ENCODE measurements at regions of chr7 and their contacts with region 1.

Region 1: GRCh38 chr7:47254081-47255006 is 327.6 kb downstream of the TNS3 start:
- DNase-seq: peak; percentile 79
- H3K4me3 ChIP-seq: peak overlapping the region; percentile 50
- H3K27ac ChIP-seq: no peak overlapping the region
- H3K4me1 ChIP-seq: peaks cover 9% of the 10 kb centered on the region
- CTCF ChIP-seq: peak; percentile 87

Region 2: DNA sequence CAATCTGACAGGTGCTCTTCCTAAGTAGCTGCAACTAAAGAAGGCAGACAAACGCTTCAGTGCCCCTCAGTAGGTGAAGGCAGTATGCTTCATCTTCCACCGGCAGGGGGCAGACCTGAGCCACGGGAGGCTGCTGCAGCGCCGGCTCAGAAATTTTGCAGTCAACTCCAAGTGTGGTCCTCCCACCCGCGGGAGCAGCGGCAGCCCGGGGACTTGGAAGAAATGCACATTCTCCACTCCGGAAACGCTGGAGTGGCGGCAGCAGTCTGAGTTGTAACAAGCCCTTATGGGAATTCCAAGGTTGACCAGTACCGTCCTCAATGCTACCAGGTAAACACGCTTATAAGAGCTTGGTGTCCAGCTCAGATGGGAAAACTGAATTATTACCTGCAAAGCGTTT is 1336.7 kb before region 1 on chr7:
- CTCF ChIA-PET with region 1: no interaction called
- POLR2A ChIA-PET with region 1: no interaction called
- intact Hi-C with region 1: loop called (anchors 10 kb)
- DNase-seq: peak; percentile 67
- H3K4me3 ChIP-seq: no peak overlapping the region
- H3K27ac ChIP-seq: no peak overlapping the region
- H3K4me1 ChIP-seq: no peaks in the 10 kb centered on the region
- CTCF ChIP-seq: peak; percentile 95

Region 3: DNA sequence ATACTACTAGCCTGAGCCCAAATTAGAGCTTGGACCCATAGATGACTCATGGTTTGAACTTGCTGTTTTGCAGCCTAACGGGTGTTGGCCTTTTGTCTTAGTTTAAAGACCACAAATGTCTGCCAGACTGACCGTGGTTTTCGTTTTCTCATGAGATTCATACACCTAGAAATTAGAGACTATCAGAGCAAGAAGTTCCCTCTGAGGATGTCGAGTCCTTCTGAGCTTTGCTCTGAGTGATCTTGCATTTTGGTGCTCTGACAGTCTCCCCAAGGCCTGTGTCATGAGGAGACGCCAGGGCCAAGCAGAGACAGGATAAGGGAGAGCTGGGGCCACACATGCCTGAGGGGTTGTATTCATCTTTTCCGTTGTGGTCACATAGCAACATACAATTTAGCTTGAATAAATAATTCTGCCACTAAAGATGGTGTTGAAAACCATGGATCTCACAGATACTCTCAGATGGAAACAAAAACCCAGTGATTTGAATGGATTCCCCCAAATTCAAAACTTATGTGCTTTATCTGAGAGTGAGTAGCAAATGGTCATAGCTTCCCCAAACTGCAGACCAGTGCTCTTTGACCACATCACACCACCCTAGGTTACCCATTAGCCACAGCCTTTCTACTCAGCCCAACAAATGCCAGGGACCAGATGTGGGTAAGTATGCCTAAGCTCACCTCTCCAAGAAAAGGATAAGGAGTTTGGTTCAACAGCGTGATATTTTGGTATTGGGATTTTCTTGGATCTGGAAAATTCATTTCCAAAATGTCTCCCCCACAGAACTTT is 571.3 kb before region 1 on chr7:
- CTCF ChIA-PET with region 1: no interaction called
- POLR2A ChIA-PET with region 1: no interaction called
- intact Hi-C with region 1: loop called (anchors 10 kb)
- DNase-seq: no peak
- H3K4me3 ChIP-seq: no peak overlapping the region
- H3K27ac ChIP-seq: no peak overlapping the region
- H3K4me1 ChIP-seq: no peaks in the 10 kb centered on the region
- CTCF ChIP-seq: no peak

Region 4: GRCh38 chr7:46776790-46777189 is 477.6 kb before region 1 on chr7:
- CTCF ChIA-PET with region 1: no interaction called
- POLR2A ChIA-PET with region 1: no interaction called
- intact Hi-C with region 1: loop called (anchors 5 kb)
- DNase-seq: peak; percentile 53
- H3K4me3 ChIP-seq: no peak overlapping the region
- H3K27ac ChIP-seq: no peak overlapping the region
- H3K4me1 ChIP-seq: no peaks in the 10 kb centered on the region
- CTCF ChIP-seq: peak; percentile 80

Region 5: GRCh38 chr7:47100817-47101435 is 153.4 kb before region 1 on chr7:
- CTCF ChIA-PET with region 1: no interaction called
- POLR2A ChIA-PET with region 1: no interaction called
- intact Hi-C with region 1: loop called (anchors 10 kb)
- DNase-seq: peak; percentile 56
- H3K4me3 ChIP-seq: no peak overlapping the region
- H3K27ac ChIP-seq: no peak overlapping the region
- H3K4me1 ChIP-seq: peaks cover 14% of the 10 kb centered on the region
- CTCF ChIP-seq: peak; percentile 88

Measured in OCI-LY7 (cell line).